HEK293 (cell line): ENCODE measurements at regions of chr17 and their contacts with region 1.

Region 1: GRCh38 chr17:43673516-43674323 is 12.0 kb upstream of the MEOX1 start:
- H3K4me3 ChIP-seq: no peak overlapping the region
- H3K27ac ChIP-seq: no peak overlapping the region
- H3K4me1 ChIP-seq: peaks cover 38% of the 10 kb centered on the region
- CTCF ChIP-seq: peak; percentile 60; the same call in 1 of the 2 replicates

Region 2: DNA sequence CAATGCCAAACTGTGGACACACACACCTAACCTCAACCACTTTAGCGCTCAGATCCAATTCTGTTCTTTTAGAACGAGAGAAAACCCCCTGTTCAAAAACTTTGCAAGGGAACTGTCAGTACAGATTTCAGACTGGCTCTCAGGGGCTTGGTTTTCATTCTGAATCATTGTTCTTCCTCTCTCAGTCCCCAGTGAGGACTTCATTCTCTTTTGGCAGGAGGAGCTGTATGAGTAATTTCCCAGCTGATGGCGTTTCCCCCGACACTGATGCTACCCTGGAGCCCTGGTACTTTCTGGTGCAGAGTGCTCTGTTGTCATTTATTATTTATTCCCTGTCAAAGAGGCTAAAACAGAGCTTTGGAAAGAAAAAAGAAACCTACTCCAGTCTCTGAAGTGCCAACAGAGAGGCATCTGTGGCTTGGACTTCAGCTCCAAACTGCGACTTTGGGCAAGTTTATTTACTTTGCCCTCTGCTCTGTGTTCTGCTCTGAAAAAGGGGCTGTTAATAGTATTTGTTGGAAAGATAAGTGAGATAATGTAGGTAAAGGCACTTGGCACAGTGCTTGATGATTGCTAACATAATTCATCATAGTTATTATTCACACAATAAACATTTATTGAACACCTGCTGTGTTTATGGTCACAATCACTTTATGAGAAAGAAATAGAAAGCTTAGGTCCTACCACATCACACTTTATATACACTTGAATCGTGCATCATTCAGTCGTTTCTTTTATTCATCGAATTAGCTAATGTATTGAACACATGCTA is 155.9 kb before region 1 on chr17:
- CTCF ChIA-PET with region 1: interaction called, 28 read pairs
- POLR2A ChIA-PET with region 1: no interaction called
- H3K4me3 ChIP-seq: no peak overlapping the region
- H3K27ac ChIP-seq: peak overlapping the region; percentile 29; the same call in 1 of the 2 replicates
- H3K4me1 ChIP-seq: peaks cover 15% of the 10 kb centered on the region
- CTCF ChIP-seq: no peak

Region 3: DNA sequence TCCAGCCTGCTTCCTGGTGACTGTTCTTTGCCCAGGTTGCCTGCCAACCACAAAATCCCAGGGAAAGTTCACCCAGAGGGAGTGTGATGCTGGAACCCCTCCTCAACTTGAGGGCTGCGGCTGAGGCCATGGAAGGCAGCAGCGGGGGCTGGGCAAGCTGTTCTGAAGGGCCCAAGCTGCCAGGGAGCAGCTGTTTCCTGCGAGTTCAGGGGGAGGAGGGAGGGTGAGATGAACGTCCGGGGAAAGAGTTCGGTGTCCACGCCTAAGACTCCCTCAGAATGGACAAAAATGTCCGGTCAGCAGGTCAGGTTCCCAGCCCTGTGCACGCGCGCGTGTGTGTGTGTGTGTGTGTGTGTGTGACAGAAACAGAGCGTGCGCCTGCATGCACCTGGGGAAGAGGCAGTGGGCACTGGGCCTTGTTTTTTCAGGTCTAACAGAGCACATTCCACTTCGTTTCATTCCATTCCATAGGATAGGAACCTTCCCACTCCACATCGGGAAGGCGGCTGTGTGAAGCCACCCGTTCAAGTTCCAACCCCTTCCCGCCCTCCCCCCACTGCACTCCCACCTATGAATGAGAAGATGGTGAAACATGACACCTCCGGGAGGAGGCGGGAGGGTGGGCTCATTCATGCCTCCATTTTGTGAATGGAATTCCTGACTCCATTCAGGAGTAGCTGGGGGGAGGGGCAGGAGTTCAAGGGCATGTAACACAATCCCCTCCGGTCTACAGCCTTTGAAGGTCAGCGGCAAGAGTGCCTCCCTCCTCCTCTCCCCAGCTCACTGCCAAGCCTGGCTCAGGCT is 143.2 kb before region 1 on chr17:
- CTCF ChIA-PET with region 1: interaction called, 18 read pairs
- POLR2A ChIA-PET with region 1: no interaction called
- H3K4me3 ChIP-seq: no peak overlapping the region; the same call in 1 of the 2 replicates
- H3K27ac ChIP-seq: peak overlapping the region; percentile 19
- H3K4me1 ChIP-seq: peaks cover 18% of the 10 kb centered on the region
- CTCF ChIP-seq: no peak

Region 4: DNA sequence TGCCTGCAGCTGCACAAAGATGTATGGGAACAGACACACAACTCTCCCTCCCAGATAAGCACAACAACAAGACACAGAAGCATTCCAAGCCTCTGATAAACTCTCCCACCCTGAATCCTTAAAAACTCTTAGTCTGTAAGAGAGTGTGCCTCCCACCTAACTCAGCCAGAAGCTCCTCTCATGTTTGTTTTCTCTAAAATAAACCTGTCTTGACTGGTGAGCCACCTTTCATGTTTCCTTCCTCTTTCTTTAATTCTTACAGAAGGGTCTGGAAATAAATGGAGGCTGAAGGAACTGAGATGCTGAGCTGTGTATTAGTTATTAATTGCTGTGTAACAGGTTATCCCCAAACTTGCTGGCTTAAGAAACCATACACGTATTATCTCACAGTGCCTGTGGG is 69.2 kb before region 1 on chr17:
- CTCF ChIA-PET with region 1: interaction called, 13 read pairs
- POLR2A ChIA-PET with region 1: no interaction called
- H3K4me3 ChIP-seq: no peak overlapping the region
- H3K27ac ChIP-seq: no peak overlapping the region
- H3K4me1 ChIP-seq: peaks cover 4% of the 10 kb centered on the region
- CTCF ChIP-seq: no peak

Region 5: GRCh38 chr17:43658900-43659299 is 14.8 kb before region 1 on chr17:
- CTCF ChIA-PET with region 1: interaction called, 18 read pairs
- POLR2A ChIA-PET with region 1: no interaction called
- H3K4me3 ChIP-seq: no peak overlapping the region
- H3K27ac ChIP-seq: no peak overlapping the region
- H3K4me1 ChIP-seq: peaks cover 37% of the 10 kb centered on the region
- CTCF ChIP-seq: no peak

Region 6: DNA sequence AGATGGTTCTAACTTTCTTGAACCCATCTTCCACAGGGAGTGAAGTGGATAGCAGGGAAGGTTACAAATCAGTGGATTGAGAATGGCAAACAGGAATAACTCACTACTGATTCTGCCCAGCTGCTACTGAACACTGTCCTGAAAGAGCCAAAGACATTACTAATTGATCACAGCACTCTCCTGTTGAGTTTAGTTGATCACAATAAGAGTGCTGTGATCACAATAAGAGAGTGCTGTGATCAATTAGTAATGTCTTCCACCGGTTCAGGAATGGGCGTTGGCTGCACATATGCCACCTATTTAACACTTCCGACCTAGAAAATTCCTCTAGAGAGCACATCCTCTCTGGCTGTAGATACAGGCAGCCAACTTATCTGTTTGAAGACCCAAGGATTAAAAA is 117.9 kb after region 1 on chr17:
- CTCF ChIA-PET with region 1: no interaction called
- POLR2A ChIA-PET with region 1: no interaction called
- H3K4me3 ChIP-seq: no peak overlapping the region
- H3K27ac ChIP-seq: no peak overlapping the region
- H3K4me1 ChIP-seq: no peaks in the 10 kb centered on the region
- CTCF ChIP-seq: no peak